BJ (cell line): ENCODE measurements at regions of chr4 and their contacts with region 1.

Region 1: GRCh38 chr4:5460116-5460801 is 248.1 kb downstream of the EVC2 start:
- DNase-seq: no peak
- H3K4me3 ChIP-seq: no peak overlapping the region
- H3K27me3 ChIP-seq: no peaks in the 10 kb centered on the region
- CTCF ChIP-seq: peak; percentile 73

Region 2: DNA sequence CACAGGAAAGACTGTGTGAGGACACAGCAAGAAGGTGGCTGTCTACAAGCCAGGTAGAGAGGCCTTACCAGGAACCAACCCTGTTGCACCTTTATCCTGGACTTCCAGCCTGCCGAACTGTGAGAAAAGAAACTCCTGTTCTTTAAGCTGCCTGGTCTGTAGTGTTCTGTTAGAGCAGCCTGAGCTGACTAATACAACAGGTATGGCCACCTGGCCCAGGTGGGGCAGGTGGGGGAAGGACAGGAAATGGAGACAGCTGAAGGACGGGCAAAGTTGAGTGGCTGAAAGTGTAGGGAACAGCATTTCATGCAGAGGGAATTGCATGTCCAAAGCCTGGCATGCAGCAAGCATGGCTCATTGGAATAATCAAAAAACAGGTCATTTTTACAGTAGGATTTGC is 476.1 kb before region 1 on chr4:
- CTCF ChIA-PET with region 1: no interaction called
- POLR2A ChIA-PET with region 1: no interaction called
- DNase-seq: no peak
- H3K4me3 ChIP-seq: no peak overlapping the region
- H3K27me3 ChIP-seq: peaks cover 3% of the 10 kb centered on the region
- CTCF ChIP-seq: no peak

Region 3: GRCh38 chr4:4995103-4995907 is 465.0 kb before region 1 on chr4:
- CTCF ChIA-PET with region 1: interaction called, 21 read pairs
- POLR2A ChIA-PET with region 1: no interaction called
- DNase-seq: no peak
- H3K4me3 ChIP-seq: no peak overlapping the region
- H3K27me3 ChIP-seq: peaks cover 3% of the 10 kb centered on the region; the same call in 1 of the 2 replicates
- CTCF ChIP-seq: peak; percentile 95

Region 4: GRCh38 chr4:5050520-5051277 is 409.6 kb before region 1 on chr4:
- CTCF ChIA-PET with region 1: interaction called, 38 read pairs
- POLR2A ChIA-PET with region 1: no interaction called
- DNase-seq: no peak
- H3K4me3 ChIP-seq: peak overlapping the region; percentile 55
- H3K27me3 ChIP-seq: no peaks in the 10 kb centered on the region; the same call in 1 of the 2 replicates
- CTCF ChIP-seq: peak; percentile 83

Region 5: DNA sequence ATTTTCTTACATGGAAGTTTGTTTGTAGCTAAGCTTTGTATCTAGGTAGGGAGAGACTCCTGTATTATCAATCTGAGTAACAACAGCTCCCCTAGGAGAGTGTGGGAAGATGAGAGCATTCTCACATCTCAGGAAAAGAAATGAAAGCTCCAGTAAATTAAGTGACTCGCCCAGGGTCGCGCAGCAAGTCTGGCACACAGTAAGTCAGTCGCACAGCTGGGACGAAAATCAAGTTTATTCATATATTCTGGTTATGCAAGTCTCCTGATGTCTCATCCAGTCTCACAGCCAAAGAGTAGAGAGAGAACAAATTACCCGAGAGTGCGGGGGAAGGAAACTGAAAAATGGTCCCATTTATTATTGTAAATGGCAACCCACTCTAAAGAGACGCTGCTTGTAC is 192.9 kb before region 1 on chr4:
- CTCF ChIA-PET with region 1: no interaction called
- POLR2A ChIA-PET with region 1: no interaction called
- DNase-seq: no peak
- H3K4me3 ChIP-seq: no peak overlapping the region
- H3K27me3 ChIP-seq: no peaks in the 10 kb centered on the region
- CTCF ChIP-seq: no peak

Region 6: DNA sequence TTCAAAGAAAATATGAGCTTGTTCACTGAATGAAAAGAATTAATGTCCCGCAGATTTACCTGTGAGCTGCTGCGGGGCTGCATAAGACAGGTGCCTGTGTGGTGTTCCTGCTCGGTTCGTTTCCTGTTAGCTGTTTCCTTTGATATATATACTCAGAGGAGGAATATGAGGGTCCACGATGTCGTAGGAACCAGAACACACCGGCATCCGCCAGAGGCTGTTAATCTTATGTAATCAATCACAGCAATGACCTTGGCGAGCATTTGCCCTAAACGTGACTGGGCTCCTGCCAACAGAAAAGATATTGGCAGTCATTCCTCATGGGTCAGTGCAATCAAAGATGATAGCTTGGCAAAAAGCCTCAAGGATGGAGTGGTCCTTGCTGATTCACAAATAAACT is 12.0 kb before region 1 on chr4:
- CTCF ChIA-PET with region 1: interaction called, 18 read pairs
- POLR2A ChIA-PET with region 1: interaction called, 3 read pairs
- DNase-seq: no peak
- H3K4me3 ChIP-seq: no peak overlapping the region
- H3K27me3 ChIP-seq: no peaks in the 10 kb centered on the region
- CTCF ChIP-seq: no peak

Region 7: GRCh38 chr4:5474756-5475155 is 14.5 kb after region 1 on chr4:
- CTCF ChIA-PET with region 1: interaction called, 21 read pairs
- POLR2A ChIA-PET with region 1: no interaction called
- DNase-seq: no peak
- H3K4me3 ChIP-seq: no peak overlapping the region
- H3K27me3 ChIP-seq: no peaks in the 10 kb centered on the region
- CTCF ChIP-seq: no peak